A549 (cell line): ENCODE measurements at regions of chr6 and their contacts with region 1.

Region 1: GRCh38 chr6:70566751-70567382 is at the start of gene SDHAF4:
- DNase-seq: peak; percentile 79 to 84
- ATAC-seq: peak; percentile 99 to 100
- H3K4me3 ChIP-seq: peak within 1 kb of the TSS; percentile 81
- H3K27ac ChIP-seq: peak within 1 kb of the TSS; percentile 93 to 100
- H3K4me1 ChIP-seq: peaks cover 4% of the 10 kb centered on the region; the same call in 1 of the 3 replicates
- CTCF ChIP-seq: no peak
- EP300 ChIP-seq: no peak
- POLR2A ChIP-seq: peak; percentile 88
- RAD21 ChIP-seq: 0 out of 5 replicates have a peak, but pooled peaks of 1 of the 2 experiments have one; percentile 16
- polyA plus RNA-seq, gene SDHAF4: 12.1 and 14.1 TPM in 2 replicates

Region 2: DNA sequence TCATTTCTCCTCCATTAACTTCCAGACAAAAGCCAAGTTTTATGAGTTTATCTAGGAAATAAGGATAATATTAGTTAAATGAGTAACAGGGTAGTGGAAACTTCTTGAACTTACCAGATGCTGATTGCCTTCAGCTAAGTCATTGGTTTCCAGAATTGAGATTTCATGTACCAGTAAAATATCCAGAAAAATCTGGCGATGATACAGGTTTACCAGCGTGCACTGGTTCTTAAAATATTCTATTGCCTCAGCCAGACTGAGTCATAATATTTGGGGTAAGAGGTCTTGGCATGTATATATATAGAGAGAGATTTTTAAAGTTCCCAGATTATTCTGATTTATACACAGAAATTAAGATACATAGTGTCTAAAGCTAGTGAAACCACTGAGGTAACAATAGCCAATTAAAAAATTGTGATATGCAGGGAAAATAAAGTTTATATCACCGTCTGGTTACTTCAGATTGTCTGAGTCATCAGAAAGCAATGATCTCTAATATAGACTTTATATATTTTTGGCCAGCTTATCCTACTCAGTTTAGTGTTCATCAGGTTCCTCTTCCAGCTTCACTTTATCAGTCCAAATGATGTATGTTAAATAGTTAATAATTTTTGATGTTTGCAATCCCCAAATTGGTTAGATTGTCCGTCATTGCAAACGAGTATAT is 39.7 kb before region 1 on chr6:
- CTCF ChIA-PET with region 1: no interaction called
- POLR2A ChIA-PET with region 1: no interaction called
- DNase-seq: no peak
- ATAC-seq: no peak
- H3K4me3 ChIP-seq: no peak overlapping the region
- H3K27ac ChIP-seq: no peak overlapping the region
- H3K4me1 ChIP-seq: no peaks in the 10 kb centered on the region
- CTCF ChIP-seq: no peak
- EP300 ChIP-seq: no peak
- POLR2A ChIP-seq: no peak
- RAD21 ChIP-seq: no peak

Region 3: GRCh38 chr6:70667711-70668498 is 101.0 kb after region 1 on chr6 and contains the start of gene SMAP1:
- CTCF ChIA-PET with region 1: no interaction called
- POLR2A ChIA-PET with region 1: interaction called, 11 read pairs
- DNase-seq: peak; percentile 77 to 88
- ATAC-seq: peak; percentile 93
- H3K4me3 ChIP-seq: peak within 1 kb of the TSS; percentile 77
- H3K27ac ChIP-seq: peak within 1 kb of the TSS; percentile 86 to 99
- H3K4me1 ChIP-seq: peaks cover 10% of the 10 kb centered on the region; the same call in 2 of the 3 replicates
- CTCF ChIP-seq: no peak
- EP300 ChIP-seq: no peak
- POLR2A ChIP-seq: peak; percentile 33
- RAD21 ChIP-seq: no peak; a peak in 1 of 5 replicates
- polyA plus RNA-seq, gene SMAP1: 27.4 and 27.8 TPM in 2 replicates